H1 (cell line): ENCODE measurements at regions of chr4 and their contacts with region 1.

Region 1: DNA sequence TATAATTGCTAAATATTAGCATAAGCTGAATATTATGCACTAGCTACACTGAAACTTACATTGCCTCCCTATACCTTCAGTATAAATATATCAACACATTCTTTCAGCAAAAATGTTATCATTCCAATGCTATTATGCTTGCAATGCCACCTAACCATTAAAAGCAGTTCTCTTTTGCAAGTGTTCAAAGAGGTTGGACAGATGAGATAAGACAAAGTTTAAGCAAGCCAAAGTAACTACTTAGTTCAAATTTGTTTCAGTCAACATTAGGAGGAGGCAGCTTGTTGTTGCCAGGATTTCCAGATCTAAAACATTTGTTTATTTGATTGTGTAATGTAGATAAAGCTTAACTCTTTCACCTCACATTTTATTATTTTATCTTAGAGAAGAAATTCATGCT is 323.9 kb upstream of the FAM241A start:
- DNase-seq: no peak
- H3K4me3 ChIP-seq: no peak overlapping the region
- H3K27ac ChIP-seq: no peak overlapping the region
- H3K4me1 ChIP-seq: no peaks in the 10 kb centered on the region
- H3K27me3 ChIP-seq: no peaks in the 10 kb centered on the region
- CTCF ChIP-seq: no peak
- EP300 ChIP-seq: no peak
- POLR2A ChIP-seq: no peak
- RAD21 ChIP-seq: no peak

Region 2: DNA sequence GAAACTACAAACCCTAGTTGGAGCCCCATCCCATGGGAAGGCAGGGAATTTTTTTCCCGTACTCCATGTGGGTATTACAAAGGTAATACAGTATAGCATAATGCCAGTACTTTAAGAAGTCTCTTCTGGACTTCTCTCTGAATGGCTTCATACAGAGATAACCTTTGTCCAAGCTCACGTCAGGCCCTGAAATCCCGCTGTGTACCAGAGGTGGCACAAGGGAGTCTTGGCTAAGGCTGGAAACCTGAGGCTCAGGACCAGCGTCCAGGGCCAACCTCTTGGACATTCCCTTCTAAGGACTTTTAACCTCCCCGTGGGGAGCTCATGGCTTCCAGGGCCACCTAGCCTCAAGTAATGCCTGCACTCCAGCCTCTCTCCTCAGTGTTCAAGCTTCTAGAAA is 15.0 kb before region 1 on chr4:
- CTCF ChIA-PET with region 1: interaction called, 12 read pairs
- POLR2A ChIA-PET with region 1: no interaction called
- DNase-seq: peak; percentile 15 to 52
- H3K4me3 ChIP-seq: no peak overlapping the region
- H3K27ac ChIP-seq: no peak overlapping the region
- H3K4me1 ChIP-seq: 0 out of 7 replicates have a peak, but pooled peaks cover 0 to 2% (median 0%) of the 10 kb centered on the region in 4 experiments
- H3K27me3 ChIP-seq: peaks cover 15 to 48% (median 40%) of the 10 kb centered on the region in 4 experiments
- CTCF ChIP-seq: peak; percentile 47 to 69 (median 57)
- EP300 ChIP-seq: no peak
- POLR2A ChIP-seq: no peak
- RAD21 ChIP-seq: peak in 1 of 2 experiments; percentile 38; a peak in 1 of 4 replicates